OCI-LY7 (cell line): ENCODE measurements at regions of chr2 and their contacts with region 1.

Region 1: GRCh38 chr2:234550511-234551107 is 53.7 kb upstream of the ARL4C start:
- DNase-seq: peak; percentile 72
- H3K4me3 ChIP-seq: no peak overlapping the region
- H3K27ac ChIP-seq: no peak overlapping the region
- H3K4me1 ChIP-seq: no peaks in the 10 kb centered on the region
- CTCF ChIP-seq: peak; percentile 98

Region 2: GRCh38 chr2:234932591-234933168 is 382.1 kb after region 1 on chr2:
- CTCF ChIA-PET with region 1: no interaction called
- POLR2A ChIA-PET with region 1: no interaction called
- intact Hi-C with region 1: no loop called
- DNase-seq: no peak
- H3K4me3 ChIP-seq: no peak overlapping the region
- H3K27ac ChIP-seq: no peak overlapping the region
- H3K4me1 ChIP-seq: no peaks in the 10 kb centered on the region
- CTCF ChIP-seq: no peak

Region 3: GRCh38 chr2:235106874-235107639 is 556.4 kb after region 1 on chr2:
- CTCF ChIA-PET with region 1: no interaction called
- POLR2A ChIA-PET with region 1: no interaction called
- intact Hi-C with region 1: loop called (anchors 2 kb)
- DNase-seq: peak; percentile 54
- H3K4me3 ChIP-seq: no peak overlapping the region
- H3K27ac ChIP-seq: no peak overlapping the region
- H3K4me1 ChIP-seq: no peaks in the 10 kb centered on the region
- CTCF ChIP-seq: peak; percentile 80

Region 4: DNA sequence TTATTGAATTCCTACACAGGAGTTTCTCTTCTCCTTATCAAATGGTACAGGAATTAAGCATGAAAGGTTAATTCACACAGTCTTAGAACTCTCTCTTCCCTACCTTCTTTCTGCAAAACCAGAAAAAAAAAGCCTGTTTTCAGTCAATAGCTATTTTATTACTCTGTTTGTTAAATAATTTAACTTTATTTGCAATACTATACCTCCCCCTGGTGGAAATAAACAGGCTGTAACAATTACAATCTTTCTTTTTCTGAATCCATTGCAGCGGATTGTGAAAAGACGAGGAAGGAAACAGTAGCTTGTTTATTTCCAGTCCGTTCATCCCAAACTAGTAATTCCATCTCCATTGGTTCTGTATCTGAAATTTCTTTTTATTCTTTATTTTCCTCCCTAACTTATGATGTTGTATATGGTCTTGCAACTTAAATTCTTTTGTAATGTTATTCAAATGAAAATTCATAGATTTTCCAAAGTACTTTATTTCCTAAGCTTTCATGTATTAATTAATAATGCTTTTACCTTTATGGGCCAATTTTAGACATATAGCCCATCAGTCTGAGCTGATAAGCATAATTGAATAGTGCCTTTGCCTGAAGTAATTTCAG is 566.4 kb after region 1 on chr2:
- CTCF ChIA-PET with region 1: no interaction called
- POLR2A ChIA-PET with region 1: no interaction called
- intact Hi-C with region 1: loop called (anchors 1 kb)
- DNase-seq: peak; percentile 48
- H3K4me3 ChIP-seq: no peak overlapping the region
- H3K27ac ChIP-seq: no peak overlapping the region
- H3K4me1 ChIP-seq: no peaks in the 10 kb centered on the region
- CTCF ChIP-seq: peak; percentile 86